Posterior cingulate gyrus (tissue), 11 donors: ENCODE measurements at regions of chr18 and their contacts with region 1.

Region 1: DNA sequence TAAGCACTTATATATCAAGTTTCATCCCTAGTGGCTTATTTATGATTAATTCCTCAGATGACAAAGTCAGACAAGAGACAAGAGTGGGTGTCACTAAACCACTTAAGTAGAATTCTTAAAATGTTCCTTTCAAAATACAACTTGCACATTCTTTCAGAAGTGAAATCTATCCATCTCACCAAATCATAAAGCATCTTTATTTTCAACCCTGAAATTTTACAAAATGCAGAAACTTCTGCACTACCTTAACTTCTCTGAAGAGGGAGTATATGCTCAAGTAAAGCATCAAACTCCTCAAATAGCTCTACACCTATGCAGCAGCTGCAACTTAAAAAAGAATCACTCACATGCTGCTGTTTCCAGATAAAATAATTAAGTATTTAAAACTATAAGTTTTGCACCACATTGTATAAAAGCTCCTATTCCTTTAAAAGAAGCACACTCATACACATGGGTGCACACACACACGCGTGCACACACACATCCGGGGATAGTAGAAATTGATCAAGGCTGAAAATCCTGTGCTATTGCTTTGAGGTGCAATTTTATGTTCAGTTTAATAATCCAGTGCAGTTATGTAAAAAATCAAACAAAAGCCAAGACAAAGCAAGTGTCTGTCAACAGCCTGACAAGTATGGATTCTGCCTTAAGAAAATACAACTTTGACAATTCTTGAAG is 244.5 kb downstream of the TCF4 start:
- DNase-seq: no peak

Region 2: GRCh38 chr18:55402731-55403405 is 59.3 kb after region 1 on chr18:
- intact Hi-C with region 1: no loop called
- DNase-seq: no peak

Region 3: DNA sequence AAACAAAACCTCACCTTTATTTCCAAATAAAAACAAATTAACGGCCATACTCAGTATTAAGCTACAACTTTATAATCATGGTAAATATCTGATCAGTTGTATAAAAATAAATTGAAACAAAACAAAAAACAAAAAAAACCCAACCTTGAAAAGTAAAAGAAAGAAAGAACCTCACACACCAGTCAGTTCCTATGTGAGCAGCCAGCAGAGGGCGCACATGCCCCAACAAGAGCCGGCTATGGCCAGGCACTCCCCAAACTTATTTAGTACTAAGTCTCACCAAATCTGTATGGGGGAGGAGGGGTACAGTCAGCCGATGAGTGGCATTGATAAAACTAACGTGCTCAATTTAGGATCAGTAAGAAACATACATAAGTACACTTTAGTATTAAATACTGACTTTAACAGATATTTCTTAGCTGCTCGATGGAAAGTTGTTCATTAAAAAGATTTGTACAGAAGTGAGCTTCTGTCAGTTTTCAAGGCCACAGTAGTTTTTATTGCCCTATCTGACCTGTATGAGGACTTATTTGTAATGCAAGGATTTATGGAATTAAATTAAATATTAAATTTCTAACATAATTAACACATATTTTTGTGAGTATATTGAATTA is 71.8 kb after region 1 on chr18:
- intact Hi-C with region 1: loop called (anchors 5 kb)
- DNase-seq: peak; percentile 74 to 98 (median 90)